ENCODE measurements at regions of chr2 and their contacts with region 1.

Region 1: GRCh38 chr2:70142590-70143313 is 48.1 kb downstream of the C2orf42 start:
- DNase-seq: peak; percentile 100
- H3K4me3 ChIP-seq: peak overlapping the region; percentile 73 to 79 (median 76)
- H3K27ac ChIP-seq: peak overlapping the region; percentile 99
- H3K4me1 ChIP-seq: peaks cover 11 to 19% (median 15%) of the 10 kb centered on the region in 3 donors
- H3K27me3 ChIP-seq: no peaks in the 10 kb centered on the region
- CTCF ChIP-seq: peak; percentile 99

Region 2: DNA sequence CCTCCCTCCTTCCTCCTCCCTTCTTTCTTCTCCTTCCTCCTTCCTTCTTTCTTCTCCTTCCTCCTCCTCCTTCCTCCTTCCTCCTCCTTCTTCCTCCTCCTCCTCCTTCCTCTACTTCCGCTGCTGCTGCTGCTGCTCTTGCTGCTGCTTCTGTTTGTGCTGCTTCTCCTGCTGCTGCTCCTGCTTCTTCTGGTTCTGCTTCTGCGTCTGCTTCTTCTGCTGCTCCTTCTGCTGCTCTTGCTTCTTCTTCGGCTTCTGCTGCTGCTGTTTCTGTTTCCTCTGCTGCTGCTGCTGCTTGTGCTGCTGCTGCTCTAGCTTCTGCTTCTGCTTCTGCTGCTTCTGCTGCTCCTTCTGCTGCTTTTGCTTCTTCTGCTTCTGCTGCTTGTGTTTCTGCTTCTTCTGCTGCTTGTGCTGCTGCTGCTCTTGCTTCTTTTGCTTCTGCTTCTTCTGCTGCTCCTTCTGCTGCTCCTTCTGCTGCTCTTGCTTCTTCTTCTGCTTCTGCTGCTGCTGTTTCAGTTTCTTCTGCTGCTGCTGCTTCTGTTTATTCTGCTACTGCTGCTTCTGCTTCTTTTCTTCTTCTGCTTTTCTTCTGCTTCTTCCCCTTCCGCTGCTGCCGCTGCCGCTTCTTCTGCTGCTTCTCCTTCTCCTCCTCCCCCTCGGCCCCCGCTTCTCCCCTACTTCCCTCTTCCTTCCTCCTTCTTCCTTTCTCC is 240.4 kb before region 1 on chr2:
- intact Hi-C with region 1: loop called (anchors 10 kb)
- DNase-seq: no peak
- H3K4me3 ChIP-seq: no peak overlapping the region
- H3K27ac ChIP-seq: no peak overlapping the region
- H3K4me1 ChIP-seq: no peaks in the 10 kb centered on the region
- H3K27me3 ChIP-seq: no peaks in the 10 kb centered on the region
- CTCF ChIP-seq: no peak